Head of caudate nucleus (tissue), 42 donors: ENCODE measurements at regions of chr3 and their contacts with region 1.

Region 1: DNA sequence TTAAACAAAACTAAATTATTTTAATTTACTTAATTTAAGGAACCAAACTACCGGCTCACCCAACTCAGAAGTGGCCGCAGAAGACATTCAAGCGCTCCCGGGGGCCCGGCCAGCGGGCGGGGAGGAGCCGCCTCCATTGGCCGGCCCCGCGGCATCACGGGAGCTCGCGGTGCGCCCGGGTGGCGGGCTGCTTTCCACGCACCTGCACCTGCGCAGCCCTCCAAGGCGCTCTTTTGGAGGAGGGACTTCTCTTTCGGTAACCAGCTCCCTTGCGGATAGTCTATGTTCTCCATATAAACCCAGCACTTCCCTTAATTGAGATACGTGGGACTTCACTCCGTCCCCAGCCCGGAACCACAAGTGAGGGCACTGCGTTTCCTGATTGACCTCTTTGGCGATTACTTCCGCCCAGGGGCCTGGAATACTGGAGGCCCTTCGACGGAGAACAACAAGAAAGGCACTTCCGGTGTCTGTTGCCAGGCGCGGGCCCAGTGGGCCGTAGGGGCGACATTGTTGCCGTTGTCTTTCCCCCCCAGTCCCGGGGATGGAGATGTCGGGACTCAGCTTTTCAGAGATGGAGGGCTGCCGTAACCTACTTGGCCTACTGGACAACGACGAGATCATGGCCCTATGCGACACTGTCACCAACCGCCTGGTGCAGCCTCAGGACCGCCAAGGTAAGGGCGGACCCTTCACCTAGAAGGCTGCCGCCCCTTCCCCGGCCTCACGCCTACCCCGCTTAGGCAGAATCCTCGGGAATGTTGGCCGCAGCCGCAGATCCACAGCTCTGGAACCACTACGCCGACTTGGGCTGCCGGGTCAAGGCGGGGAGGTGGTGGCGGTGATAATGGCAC is at the start of gene C3orf38:
- DNase-seq: peak; percentile 81 to 97 (median 91)

Region 2: DNA sequence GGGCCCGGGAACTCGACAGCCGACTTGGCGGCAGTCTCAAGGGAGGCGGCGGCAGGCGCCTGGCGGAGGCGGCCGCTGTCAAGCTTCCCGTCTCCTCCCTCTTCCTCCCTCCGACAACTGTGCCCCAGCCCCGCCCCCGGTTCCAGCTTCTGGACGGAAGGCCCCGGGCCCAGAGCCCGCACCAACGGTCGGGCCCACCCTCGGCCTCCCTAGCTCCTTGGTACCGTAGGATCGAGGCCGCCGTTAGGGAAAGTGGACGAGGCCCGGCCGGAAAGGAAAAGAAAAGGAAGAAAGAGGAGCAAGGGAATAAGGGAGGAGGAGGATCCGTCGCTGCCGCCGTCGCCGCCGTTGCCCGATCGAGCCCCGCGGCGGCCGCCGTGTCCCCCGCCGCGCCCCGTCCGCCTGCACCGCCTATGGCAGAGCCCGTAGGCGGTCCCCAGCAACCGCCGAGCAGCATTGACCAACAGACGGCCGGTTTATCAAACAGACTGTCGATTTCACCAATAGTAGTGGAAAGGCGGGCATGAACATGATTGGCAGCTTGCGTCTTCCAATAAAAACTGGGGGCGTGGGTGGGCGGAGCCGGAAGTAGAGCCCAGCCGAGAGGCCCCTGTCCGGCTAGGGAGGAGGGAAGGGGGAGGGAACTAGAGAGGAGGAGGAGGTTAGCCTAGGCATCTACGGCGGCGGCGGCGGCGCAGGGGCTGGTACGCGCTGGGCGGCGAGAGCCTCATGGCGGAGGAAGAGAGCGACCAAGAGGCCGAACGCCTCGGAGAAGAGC is 91.0 kb before region 1 on chr3 and contains the starts of genes CGGBP1 and ZNF654:
- intact Hi-C with region 1: loop called (anchors 2 kb)
- DNase-seq: peak; percentile 95 to 100 (median 99)

Region 3: GRCh38 chr3:88167704-88168103 is 18.0 kb after region 1 on chr3:
- intact Hi-C with region 1: no loop called
- DNase-seq: no peak